ENCODE measurements at regions of chr7 and their contacts with region 1.

Region 1: DNA sequence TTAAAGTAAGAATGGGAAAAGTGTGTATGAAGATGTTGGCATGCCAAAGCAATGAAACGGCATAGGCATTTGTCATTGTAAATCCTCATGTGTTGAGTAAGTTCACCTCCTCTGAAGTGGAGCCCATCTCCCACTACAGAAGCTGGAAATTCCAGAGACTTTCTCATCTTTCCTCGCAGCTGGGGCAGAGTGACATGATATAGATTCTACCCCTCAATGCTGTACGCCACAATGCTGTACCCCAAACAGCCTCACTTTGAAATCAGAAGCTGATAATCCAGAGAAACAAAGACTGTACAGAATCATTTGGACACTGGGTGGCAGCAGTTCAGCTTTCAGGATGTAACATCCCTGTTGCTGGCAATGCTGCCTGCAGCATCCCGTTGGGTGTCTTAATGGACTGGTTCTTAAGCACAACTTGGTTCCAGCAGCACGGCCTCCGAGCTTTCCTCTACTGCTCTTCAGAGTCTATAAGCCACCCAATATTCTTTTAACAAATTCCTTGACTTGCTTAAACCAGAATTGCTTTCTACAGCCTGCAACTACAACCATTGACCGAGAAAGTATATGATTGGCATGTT is 18.8 kb downstream of the ZC3HAV1L start:
- DNase-seq: no peak
- ATAC-seq: peak in 1 of 2 donors; percentile 50
- H3K4me3 ChIP-seq: no peak overlapping the region
- H3K27ac ChIP-seq: no peak overlapping the region
- H3K4me1 ChIP-seq: no peaks in the 10 kb centered on the region
- H3K27me3 ChIP-seq: no peaks in the 10 kb centered on the region
- CTCF ChIP-seq: peak; percentile 11 to 52 (median 38)
- POLR2A ChIP-seq: no peak

Region 2: DNA sequence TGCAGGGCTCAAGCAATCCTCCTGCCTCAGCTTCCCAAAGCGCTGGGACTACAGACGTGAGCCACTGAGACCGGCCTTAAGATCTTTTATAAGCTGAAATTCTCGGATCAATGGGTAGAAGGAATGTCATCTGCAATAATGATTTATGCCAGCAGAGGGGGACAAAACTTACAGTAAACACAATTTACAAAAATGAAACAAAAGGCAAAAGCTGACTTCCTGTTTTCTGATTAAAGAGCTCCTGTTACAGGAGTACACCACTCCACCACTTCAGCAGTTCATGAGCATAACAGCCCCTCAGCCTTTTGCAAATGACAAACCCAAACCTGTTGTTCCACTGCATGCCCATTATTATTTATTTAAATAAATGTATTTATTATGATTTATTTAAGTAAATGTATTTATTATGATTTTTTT is 130.5 kb before region 1 on chr7:
- in situ Hi-C with region 1: no loop called
- intact Hi-C with region 1: no loop called
- DNase-seq: no peak
- ATAC-seq: no peak
- H3K4me3 ChIP-seq: no peak overlapping the region
- H3K27ac ChIP-seq: no peak overlapping the region
- H3K4me1 ChIP-seq: no peaks in the 10 kb centered on the region
- H3K27me3 ChIP-seq: no peaks in the 10 kb centered on the region
- CTCF ChIP-seq: peak in 4 of 5 experiments; percentile 19 to 57 (median 44)
- POLR2A ChIP-seq: no peak

Region 3: DNA sequence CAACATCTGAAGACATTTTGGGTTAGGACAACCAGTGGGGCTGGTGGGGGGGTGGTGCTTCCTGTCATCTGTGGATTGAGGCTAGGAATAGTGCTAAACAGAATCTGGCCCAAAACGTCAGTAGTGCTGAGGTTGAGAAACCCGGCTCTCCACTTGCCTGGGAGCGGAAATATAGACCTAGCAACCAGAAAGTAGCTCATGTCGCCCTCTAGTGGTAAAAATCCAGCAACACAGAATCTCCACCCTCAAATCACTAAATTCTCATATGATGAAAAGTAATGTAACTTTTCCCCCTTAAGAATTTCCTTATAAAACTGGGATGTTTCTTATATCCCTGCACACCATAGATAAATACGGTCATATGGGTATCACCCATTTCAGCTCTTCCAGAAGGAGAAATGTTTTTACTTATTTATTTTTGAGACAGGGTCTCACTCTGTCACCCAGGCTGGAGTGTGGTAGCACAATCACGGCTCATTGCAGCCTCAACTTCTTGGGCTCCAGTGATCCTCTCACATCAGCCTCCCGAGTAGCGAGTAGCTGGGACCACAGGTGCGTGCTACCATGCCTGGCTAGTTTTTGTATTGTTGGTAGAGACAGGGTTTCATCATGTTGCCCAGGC is 58.1 kb after region 1 on chr7:
- in situ Hi-C with region 1: no loop called
- intact Hi-C with region 1: loop called (anchors 1 kb)
- DNase-seq: peak; percentile 35 to 46
- ATAC-seq: peak; percentile 81 to 90
- H3K4me3 ChIP-seq: no peak overlapping the region
- H3K27ac ChIP-seq: peak overlapping the region; percentile 27 to 50 (median 44)
- H3K4me1 ChIP-seq: no peaks in the 10 kb centered on the region
- H3K27me3 ChIP-seq: no peaks in the 10 kb centered on the region
- CTCF ChIP-seq: peak; percentile 56 to 84 (median 74)
- POLR2A ChIP-seq: no peak

Measured in gastrocnemius medialis (tissue), 4 donors.